Common myeloid progenitor, CD34-positive (primary cell): ENCODE measurements at regions of chr9 and their contacts with region 1.

Region 1: GRCh38 chr9:9912459-9912858 is 700.3 kb downstream of the PTPRD start:
- DNase-seq: peak in 2 of 3 donors; percentile 36 to 47
- H3K4me3 ChIP-seq: no peak overlapping the region
- H3K27ac ChIP-seq: no peak overlapping the region
- H3K4me1 ChIP-seq: peaks cover under 1 to 13% (median 6%) of the 10 kb centered on the region in 4 experiments
- H3K27me3 ChIP-seq: no peaks in the 10 kb centered on the region

Region 2: GRCh38 chr9:9603345-9603744 is 309.1 kb before region 1 on chr9:
- CTCF ChIA-PET with region 1: interaction called, 35 read pairs
- POLR2A ChIA-PET with region 1: no interaction called
- DNase-seq: no peak
- H3K4me3 ChIP-seq: no peak overlapping the region
- H3K27ac ChIP-seq: no peak overlapping the region
- H3K4me1 ChIP-seq: peaks cover 0 to 1% (median 0%) of the 10 kb centered on the region in 4 experiments
- H3K27me3 ChIP-seq: no peaks in the 10 kb centered on the region

Region 3: DNA sequence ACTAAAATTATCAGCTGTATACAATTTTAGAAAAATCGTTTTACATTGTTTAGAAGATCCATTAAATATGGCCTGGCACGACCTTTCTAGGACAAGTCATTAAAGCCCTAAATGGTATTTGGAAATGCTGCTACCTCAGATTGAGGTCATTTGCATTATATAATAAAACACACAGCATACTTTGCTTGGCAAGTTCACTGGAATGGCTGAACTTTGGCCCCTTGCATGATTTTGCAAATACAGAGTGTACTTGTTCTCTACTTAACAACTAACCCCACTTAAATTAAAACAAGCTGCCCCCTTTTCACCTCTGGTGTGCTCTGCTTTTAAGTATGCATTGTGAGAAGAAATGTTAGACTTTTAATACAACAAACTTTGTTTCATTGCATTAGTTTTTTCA is 159.7 kb before region 1 on chr9:
- CTCF ChIA-PET with region 1: no interaction called
- POLR2A ChIA-PET with region 1: no interaction called
- DNase-seq: no peak
- H3K4me3 ChIP-seq: no peak overlapping the region
- H3K27ac ChIP-seq: no peak overlapping the region
- H3K4me1 ChIP-seq: no peaks in the 10 kb centered on the region
- H3K27me3 ChIP-seq: no peaks in the 10 kb centered on the region

Region 4: DNA sequence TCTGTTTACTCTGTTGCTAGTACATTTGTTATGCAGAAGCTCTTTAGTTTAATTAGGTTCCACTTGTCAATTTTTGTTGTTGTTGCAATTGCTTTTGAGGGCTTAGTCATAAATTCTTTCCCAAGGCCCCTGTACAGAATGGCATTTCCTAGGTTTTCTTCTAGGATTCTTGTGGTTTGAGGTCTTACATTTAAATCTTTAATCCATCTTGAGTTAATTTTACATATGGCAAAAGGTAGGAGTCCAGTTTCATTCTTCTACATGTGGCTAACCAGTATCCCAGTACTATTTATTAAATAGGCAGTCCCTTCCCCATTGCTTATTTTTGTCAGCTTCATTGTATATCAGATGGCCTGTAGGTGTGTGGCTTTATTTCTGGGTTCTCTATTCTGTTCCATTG is 92.0 kb before region 1 on chr9:
- CTCF ChIA-PET with region 1: no interaction called
- POLR2A ChIA-PET with region 1: no interaction called
- DNase-seq: no peak
- H3K4me3 ChIP-seq: no peak overlapping the region
- H3K27ac ChIP-seq: no peak overlapping the region
- H3K4me1 ChIP-seq: no peaks in the 10 kb centered on the region
- H3K27me3 ChIP-seq: no peaks in the 10 kb centered on the region

Region 5: GRCh38 chr9:9942764-9943424 is 30.4 kb after region 1 on chr9:
- CTCF ChIA-PET with region 1: interaction called, 20 read pairs
- POLR2A ChIA-PET with region 1: no interaction called
- DNase-seq: peak; percentile 69 to 79 (median 69)
- H3K4me3 ChIP-seq: no peak overlapping the region
- H3K27ac ChIP-seq: no peak overlapping the region
- H3K4me1 ChIP-seq: peaks cover 0 to 3% (median 0%) of the 10 kb centered on the region in 4 experiments
- H3K27me3 ChIP-seq: no peaks in the 10 kb centered on the region